ENCODE measurements at regions of chr10 and their contacts with region 1.

Region 1: DNA sequence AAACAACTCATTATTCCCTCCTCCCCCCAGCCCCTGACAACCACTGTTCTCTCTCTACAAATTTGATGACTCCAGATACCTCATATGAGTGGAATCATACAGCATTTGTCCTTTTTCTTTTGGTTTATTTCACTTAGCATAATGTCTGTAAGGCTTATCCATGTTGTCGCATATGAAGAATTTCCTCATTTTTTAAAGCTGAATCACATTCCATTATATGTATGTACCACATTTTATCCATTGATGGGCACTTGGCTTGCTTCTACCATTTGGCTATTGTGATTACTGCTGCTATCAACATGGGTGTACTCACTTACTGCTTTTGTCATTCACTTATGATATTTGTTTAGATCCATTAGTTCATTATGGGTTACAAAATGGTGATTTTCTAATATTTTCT is 112.8 kb downstream of the BUB3 start:
- DNase-seq: no peak
- ATAC-seq: no peak
- H3K4me3 ChIP-seq: no peak overlapping the region
- H3K27ac ChIP-seq: no peak overlapping the region
- H3K4me1 ChIP-seq: peaks cover 7% of the 10 kb centered on the region; the same call in 1 of the 2 replicates
- H3K27me3 ChIP-seq: 0 out of 5 replicates have a peak, but pooled peaks cover 0 to 4% of the 10 kb centered on the region in 2 experiments
- CTCF ChIP-seq: no peak
- EP300 ChIP-seq: no peak
- POLR2A ChIP-seq: no peak
- RAD21 ChIP-seq: no peak

Region 2: DNA sequence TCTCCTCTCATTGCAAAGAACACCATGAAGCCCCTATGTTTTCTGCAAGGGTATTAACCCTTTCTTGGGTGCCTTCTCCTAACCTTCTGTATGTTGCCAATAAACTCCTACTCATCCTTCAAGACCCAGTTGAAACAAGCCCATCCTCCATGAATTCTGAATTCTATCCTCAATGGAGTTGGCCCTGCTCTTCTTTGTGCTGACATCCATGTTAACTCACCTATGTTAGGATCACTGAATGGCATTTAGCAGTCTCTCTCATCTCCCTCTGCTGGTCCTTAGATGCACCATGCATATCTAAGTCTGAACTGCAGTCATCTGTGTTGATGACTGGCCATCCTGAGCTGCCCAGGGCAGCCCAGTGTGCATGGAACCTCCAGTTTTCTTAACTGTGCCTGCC is 17.1 kb after region 1 on chr10:
- CTCF ChIA-PET with region 1: no interaction called
- POLR2A ChIA-PET with region 1: no interaction called
- in situ Hi-C with region 1: no loop called
- intact Hi-C with region 1: loop called (anchors 1 kb)
- DNase-seq: peak; percentile 18
- ATAC-seq: peak; percentile 85
- H3K4me3 ChIP-seq: no peak overlapping the region
- H3K27ac ChIP-seq: no peak overlapping the region
- H3K4me1 ChIP-seq: no peaks in the 10 kb centered on the region
- H3K27me3 ChIP-seq: peaks cover 0 to 9% of the 10 kb centered on the region in 2 experiments; a peak in 1 of 5 replicates
- CTCF ChIP-seq: peak; percentile 42; the same call in 1 of the 2 replicates
- EP300 ChIP-seq: no peak
- POLR2A ChIP-seq: no peak
- RAD21 ChIP-seq: no peak

Region 3: GRCh38 chr10:123318516-123318915 is 51.5 kb after region 1 on chr10:
- CTCF ChIA-PET with region 1: no interaction called
- POLR2A ChIA-PET with region 1: no interaction called
- in situ Hi-C with region 1: no loop called
- intact Hi-C with region 1: no loop called
- DNase-seq: no peak
- ATAC-seq: no peak
- H3K4me3 ChIP-seq: no peak overlapping the region
- H3K27ac ChIP-seq: no peak overlapping the region
- H3K4me1 ChIP-seq: no peaks in the 10 kb centered on the region
- H3K27me3 ChIP-seq: no peaks in the 10 kb centered on the region
- CTCF ChIP-seq: no peak
- EP300 ChIP-seq: no peak
- POLR2A ChIP-seq: no peak
- RAD21 ChIP-seq: no peak